ENCODE measurements at regions of chr1 and their contacts with region 1.

Region 1: DNA sequence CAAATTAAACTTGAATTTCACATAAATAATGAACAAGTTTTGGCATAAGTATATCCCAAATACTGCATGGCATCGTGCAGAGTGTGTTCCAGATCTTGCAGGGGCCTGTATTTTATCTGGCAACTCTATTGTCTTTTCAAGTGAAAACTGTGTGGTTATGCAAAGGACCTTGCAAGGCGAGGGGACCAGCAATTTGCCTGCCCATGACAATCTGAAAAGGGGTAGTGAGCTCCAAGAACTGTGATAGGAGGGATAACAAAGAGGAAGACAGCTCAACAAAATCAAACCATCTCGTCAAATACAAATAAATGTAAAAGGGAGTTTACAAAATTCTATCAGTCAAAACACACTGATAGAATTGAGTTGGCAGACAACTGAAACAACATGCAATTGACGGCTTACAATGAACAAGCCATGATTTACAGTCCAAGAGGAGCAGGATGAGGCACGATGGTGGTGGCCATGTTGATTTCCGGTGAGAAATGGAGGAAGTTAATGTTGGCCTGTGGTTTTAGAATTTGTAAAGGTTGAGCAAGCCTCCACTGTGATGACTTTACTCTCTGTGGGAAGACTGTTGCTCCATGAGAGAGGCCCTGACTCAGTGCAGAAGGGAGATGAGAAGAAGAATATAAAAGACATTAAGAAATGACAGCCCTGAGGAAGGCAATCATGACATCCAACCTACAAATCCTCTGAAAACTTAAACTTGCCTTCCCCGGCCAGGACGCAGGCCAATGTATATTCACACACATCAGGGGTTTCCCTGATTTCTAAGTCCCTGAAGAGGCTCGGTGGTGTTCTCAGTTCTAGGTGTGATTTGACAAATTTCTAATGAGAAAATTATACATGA is 132.2 kb downstream of the ADSS2 start:
- DNase-seq: peak; percentile 90
- ATAC-seq: peak; percentile 41
- H3K4me3 ChIP-seq: no peak overlapping the region
- H3K27ac ChIP-seq: peak overlapping the region; percentile 23
- H3K4me1 ChIP-seq: peaks cover 7% of the 10 kb centered on the region
- H3K27me3 ChIP-seq: no peaks in the 10 kb centered on the region
- CTCF ChIP-seq: no peak
- POLR2A ChIP-seq: no peak
- RAD21 ChIP-seq: no peak; the same call in 1 of the 2 replicates

Region 2: DNA sequence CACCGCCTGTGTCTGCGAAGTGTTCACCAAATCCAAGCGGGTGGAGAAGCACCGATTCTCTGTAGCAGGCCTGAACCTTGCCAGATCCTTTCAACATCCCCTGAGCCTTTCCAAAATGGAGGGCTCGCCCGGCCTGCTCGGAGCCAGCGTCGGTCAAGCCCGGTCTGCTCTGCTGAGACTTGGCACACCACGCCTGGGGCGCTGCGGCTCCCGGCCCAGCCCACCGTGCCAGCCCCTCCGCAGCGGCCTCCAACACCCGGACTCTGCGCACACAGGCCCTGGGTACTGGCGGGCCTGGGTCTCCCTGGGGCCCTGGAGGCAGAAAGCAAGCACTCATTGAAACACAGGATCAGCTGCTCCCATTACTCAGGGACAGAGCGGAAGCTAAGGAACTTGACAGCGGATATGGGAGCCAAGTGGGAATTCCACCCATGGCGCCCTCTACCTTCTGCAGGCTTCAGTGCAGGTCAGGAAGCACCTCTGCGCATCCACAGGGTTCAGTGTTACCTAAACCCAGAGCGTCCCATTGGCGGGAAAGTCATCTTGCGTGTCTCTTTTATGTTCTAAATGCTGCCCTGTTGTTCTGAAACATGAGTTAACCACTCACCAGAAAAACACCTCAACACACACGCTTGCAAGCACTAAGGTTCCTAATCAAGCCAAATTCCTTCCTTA is 108.5 kb before region 1 on chr1:
- CTCF ChIA-PET with region 1: no interaction called
- POLR2A ChIA-PET with region 1: no interaction called
- dilution Hi-C with region 1: no loop called
- in situ Hi-C with region 1: no loop called
- intact Hi-C with region 1: no loop called
- DNase-seq: no peak
- ATAC-seq: no peak
- H3K4me3 ChIP-seq: no peak overlapping the region
- H3K27ac ChIP-seq: no peak overlapping the region
- H3K4me1 ChIP-seq: peaks cover 11% of the 10 kb centered on the region
- H3K27me3 ChIP-seq: no peaks in the 10 kb centered on the region
- CTCF ChIP-seq: no peak
- POLR2A ChIP-seq: no peak
- RAD21 ChIP-seq: no peak

Region 3: GRCh38 chr1:244445320-244446181 is 126.0 kb after region 1 on chr1:
- CTCF ChIA-PET with region 1: no interaction called
- POLR2A ChIA-PET with region 1: no interaction called
- dilution Hi-C with region 1: no loop called
- in situ Hi-C with region 1: no loop called
- intact Hi-C with region 1: loop called (anchors 2 kb)
- DNase-seq: peak; percentile 17
- ATAC-seq: peak; percentile 49
- H3K4me3 ChIP-seq: no peak overlapping the region
- H3K27ac ChIP-seq: peak overlapping the region; percentile 77; the same call in 1 of the 2 replicates
- H3K4me1 ChIP-seq: peaks cover 18% of the 10 kb centered on the region
- H3K27me3 ChIP-seq: no peaks in the 10 kb centered on the region
- CTCF ChIP-seq: no peak
- POLR2A ChIP-seq: no peak
- RAD21 ChIP-seq: no peak

Region 4: DNA sequence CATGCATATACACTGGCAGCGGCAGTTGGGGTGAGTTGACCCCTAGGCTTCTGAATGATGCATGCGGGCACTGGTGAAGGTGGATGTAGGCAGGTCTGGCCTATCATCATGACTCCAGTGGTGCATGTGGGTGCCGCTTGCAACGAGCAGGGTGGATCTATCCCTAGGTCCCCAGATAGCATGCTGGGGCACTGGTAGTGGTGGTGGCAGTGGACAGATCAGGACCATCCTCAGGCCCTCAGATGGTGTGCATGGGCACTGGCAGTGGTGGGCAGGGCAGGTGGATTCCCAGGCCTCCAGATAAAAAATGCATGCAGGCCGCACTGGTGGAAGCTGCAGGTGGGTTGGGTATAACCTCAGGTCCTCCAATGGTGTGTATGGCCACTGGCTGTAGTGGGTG is 194.0 kb after region 1 on chr1:
- CTCF ChIA-PET with region 1: no interaction called
- POLR2A ChIA-PET with region 1: no interaction called
- dilution Hi-C with region 1: no loop called
- in situ Hi-C with region 1: no loop called
- intact Hi-C with region 1: no loop called
- DNase-seq: no peak
- ATAC-seq: no peak
- H3K4me3 ChIP-seq: no peak overlapping the region
- H3K27ac ChIP-seq: no peak overlapping the region
- H3K4me1 ChIP-seq: no peaks in the 10 kb centered on the region
- H3K27me3 ChIP-seq: no peaks in the 10 kb centered on the region
- CTCF ChIP-seq: no peak
- POLR2A ChIP-seq: no peak
- RAD21 ChIP-seq: no peak